Tibial artery (tissue), 4 donors: ENCODE measurements at regions of chr1 and their contacts with region 1.

Region 1: GRCh38 chr1:8423650-8424538 is 106.0 kb downstream of the SLC45A1 start:
- DNase-seq: peak; percentile 58 to 81
- H3K4me3 ChIP-seq: peak overlapping the region; percentile 73 to 96
- H3K27ac ChIP-seq: peak overlapping the region; percentile 95 to 99
- H3K4me1 ChIP-seq: peaks cover 0 to 43% (median 32%) of the 10 kb centered on the region in 4 donors
- H3K27me3 ChIP-seq: no peaks in the 10 kb centered on the region
- CTCF ChIP-seq: peak; percentile 7 to 21

Region 2: GRCh38 chr1:8477166-8477982 is 53.5 kb after region 1 on chr1:
- intact Hi-C with region 1: no loop called
- DNase-seq: no peak
- H3K4me3 ChIP-seq: peak overlapping the region; percentile 9 to 15
- H3K27ac ChIP-seq: peak overlapping the region; percentile 66 to 70
- H3K4me1 ChIP-seq: peaks cover 0 to 37% (median 18%) of the 10 kb centered on the region in 4 donors
- H3K27me3 ChIP-seq: no peaks in the 10 kb centered on the region
- CTCF ChIP-seq: no peak

Region 3: GRCh38 chr1:8702850-8703810 is 279.2 kb after region 1 on chr1:
- intact Hi-C with region 1: loop called (anchors 10 kb)
- DNase-seq: peak; percentile 84 to 95
- H3K4me3 ChIP-seq: peak overlapping the region; percentile 62 to 78
- H3K27ac ChIP-seq: peak overlapping the region; percentile 82 to 86
- H3K4me1 ChIP-seq: peaks cover 0 to 32% (median 18%) of the 10 kb centered on the region in 4 donors
- H3K27me3 ChIP-seq: no peaks in the 10 kb centered on the region
- CTCF ChIP-seq: peak in 1 of 2 experiments; percentile 32